ENCODE measurements at regions of chr10 and their contacts with region 1.

Region 1: GRCh38 chr10:96299383-96299782 is 4.9 kb upstream of the DNTT start:
- DNase-seq: no peak
- CTCF ChIP-seq: no peak

Region 2: GRCh38 chr10:96218826-96219225 is 80.6 kb before region 1 on chr10:
- in situ Hi-C with region 1: loop called (anchors 5 kb)
- DNase-seq: no peak
- CTCF ChIP-seq: no peak